Ascending aorta (tissue), 2 donors: ENCODE measurements at regions of chr17 and their contacts with region 1.

Region 1: GRCh38 chr17:73192894-73193701 is at the start of gene COG1:
- DNase-seq: peak; percentile 29 to 92
- H3K4me3 ChIP-seq: peak within 1 kb of the TSS; percentile 91 to 93
- H3K27ac ChIP-seq: peak within 1 kb of the TSS; percentile 91 to 92
- H3K4me1 ChIP-seq: peaks cover 4 to 6% of the 10 kb centered on the region in 2 donors
- H3K27me3 ChIP-seq: no peaks in the 10 kb centered on the region
- CTCF ChIP-seq: no peak
- total RNA-seq, gene COG1: 35.9 TPM

Region 2: GRCh38 chr17:73092523-73093135 is 100.5 kb before region 1 on chr17 and contains the start of gene SLC39A11:
- intact Hi-C with region 1: loop called (anchors 2 kb)
- DNase-seq: peak; percentile 80 to 95
- H3K4me3 ChIP-seq: peak within 1 kb of the TSS; percentile 77 to 86
- H3K27ac ChIP-seq: peak within 1 kb of the TSS; percentile 66 to 74
- H3K4me1 ChIP-seq: peaks cover 3 to 24% of the 10 kb centered on the region in 2 donors
- H3K27me3 ChIP-seq: no peaks in the 10 kb centered on the region
- CTCF ChIP-seq: no peak
- total RNA-seq, gene SLC39A11: 4.9 TPM

Region 3: DNA sequence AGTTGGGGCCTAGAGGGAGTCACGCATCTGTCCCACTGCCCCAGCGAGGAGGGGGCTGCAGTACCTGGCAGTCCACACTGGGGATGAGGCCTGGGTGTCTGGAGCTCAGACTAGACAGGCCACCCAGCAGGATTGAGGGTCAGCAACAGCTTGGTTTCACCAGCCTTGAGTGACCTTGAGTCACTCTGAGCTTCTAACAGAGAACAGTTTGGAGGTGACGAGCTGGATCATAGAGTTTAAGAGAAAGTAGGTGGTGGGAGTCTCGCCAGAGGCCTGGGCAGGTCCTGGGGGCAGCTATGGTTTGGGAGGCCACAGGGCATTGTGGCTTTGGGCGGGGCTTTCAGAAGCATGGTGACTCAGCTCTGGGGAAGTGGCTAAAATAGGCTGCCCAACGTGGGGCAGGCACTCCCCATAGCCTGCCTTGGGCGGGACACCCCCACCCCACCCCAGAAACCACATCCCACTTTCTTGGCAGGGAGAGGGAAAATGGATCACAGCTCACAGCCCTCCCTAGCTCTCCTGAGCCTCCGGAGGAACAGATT is 98.2 kb after region 1 on chr17:
- intact Hi-C with region 1: loop called (anchors 5 kb)
- DNase-seq: peak; percentile 50 to 93
- H3K4me3 ChIP-seq: peak overlapping the region; percentile 36 to 42
- H3K27ac ChIP-seq: peak overlapping the region; percentile 96 to 99
- H3K4me1 ChIP-seq: peaks cover 34 to 82% of the 10 kb centered on the region in 2 donors
- H3K27me3 ChIP-seq: no peaks in the 10 kb centered on the region
- CTCF ChIP-seq: no peak

Region 4: DNA sequence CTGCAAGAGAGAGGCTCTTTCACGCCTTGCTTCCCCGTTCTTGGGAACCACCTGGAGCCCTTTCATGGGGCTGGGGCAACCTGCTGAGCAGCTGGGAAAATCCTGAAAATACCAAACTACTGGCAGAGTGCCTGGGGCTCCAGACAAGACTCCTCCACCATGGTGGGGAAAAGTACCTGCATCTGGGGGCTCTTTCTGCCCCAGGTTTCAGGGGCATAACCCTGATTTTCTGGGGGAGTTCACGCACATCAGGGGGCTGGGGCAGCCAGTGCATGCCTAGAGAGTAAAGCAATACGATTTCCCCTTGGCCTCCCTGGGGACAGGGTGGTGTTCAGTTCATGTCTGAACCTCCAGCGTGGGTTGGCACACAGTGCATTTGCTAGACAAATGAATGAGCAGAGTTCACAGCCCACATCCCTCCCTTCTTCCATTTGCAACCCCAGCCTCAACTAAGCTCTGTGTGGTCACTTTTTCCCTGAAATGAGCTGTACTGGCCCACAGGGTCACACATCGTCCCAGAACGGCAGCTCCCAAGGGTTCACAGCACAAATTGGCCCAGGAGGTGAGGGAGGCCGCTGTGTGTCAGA is 123.9 kb after region 1 on chr17:
- intact Hi-C with region 1: no loop called
- DNase-seq: no peak
- H3K4me3 ChIP-seq: no peak overlapping the region
- H3K27ac ChIP-seq: no peak overlapping the region
- H3K4me1 ChIP-seq: peaks cover 0 to 6% of the 10 kb centered on the region in 2 donors
- H3K27me3 ChIP-seq: no peaks in the 10 kb centered on the region
- CTCF ChIP-seq: no peak

Region 5: DNA sequence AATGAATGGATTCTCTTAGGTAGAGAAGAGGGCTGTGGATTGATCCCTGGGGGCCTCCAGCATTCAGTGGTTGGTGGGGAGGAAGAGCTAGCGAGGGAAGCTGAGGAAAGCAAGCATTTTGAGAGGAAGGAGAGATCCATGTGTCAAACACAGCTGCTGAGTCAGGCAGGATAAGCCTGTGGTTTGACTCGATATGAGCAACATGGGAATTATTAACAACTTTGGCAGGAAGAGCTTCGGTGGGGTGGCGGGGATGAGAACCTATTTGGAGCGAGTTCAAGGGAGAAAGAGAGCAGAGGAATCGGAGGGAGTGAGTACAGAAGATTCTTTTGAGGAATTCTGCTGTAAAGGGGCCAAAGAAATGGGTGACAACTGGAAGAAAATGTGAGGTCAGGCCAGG is 178.2 kb after region 1 on chr17:
- intact Hi-C with region 1: loop called (anchors 1 kb)
- DNase-seq: no peak
- H3K4me3 ChIP-seq: no peak overlapping the region
- H3K27ac ChIP-seq: no peak overlapping the region
- H3K4me1 ChIP-seq: no peaks in the 10 kb centered on the region
- H3K27me3 ChIP-seq: no peaks in the 10 kb centered on the region
- CTCF ChIP-seq: no peak

Region 6: DNA sequence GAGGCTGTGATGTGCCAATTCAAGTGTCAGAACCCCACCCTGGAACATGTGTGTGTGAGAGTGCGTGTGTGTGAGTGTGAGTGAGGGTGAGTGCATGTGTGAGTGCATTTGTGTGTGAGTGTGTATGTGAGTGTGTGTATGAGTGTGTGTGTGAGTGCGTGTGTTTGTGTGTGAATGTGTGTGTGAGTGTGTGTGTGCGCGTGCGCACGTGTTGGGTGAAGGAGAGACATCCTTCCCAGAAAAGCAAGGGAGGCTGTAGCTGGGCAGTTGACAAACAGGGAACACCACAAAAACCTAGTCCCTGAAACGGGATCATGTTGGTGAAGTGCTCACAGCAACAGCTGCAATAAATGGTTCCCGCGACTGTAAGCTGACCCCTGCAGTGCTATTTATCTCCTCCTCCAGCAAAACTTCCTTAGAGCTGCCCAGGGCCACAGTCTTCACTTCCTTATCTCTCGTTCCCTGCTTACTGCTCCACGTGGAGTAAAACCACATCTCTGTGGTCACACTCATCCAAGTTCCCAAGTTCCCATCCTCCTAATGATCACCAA is 970.2 kb after region 1 on chr17:
- intact Hi-C with region 1: no loop called
- DNase-seq: peak in 1 of 2 donors; percentile 22
- H3K4me3 ChIP-seq: no peak overlapping the region
- H3K27ac ChIP-seq: no peak overlapping the region
- H3K4me1 ChIP-seq: no peaks in the 10 kb centered on the region
- H3K27me3 ChIP-seq: no peaks in the 10 kb centered on the region
- CTCF ChIP-seq: no peak